Panc1 (cell line): ENCODE measurements at regions of chr2 and their contacts with region 1.

Region 1: DNA sequence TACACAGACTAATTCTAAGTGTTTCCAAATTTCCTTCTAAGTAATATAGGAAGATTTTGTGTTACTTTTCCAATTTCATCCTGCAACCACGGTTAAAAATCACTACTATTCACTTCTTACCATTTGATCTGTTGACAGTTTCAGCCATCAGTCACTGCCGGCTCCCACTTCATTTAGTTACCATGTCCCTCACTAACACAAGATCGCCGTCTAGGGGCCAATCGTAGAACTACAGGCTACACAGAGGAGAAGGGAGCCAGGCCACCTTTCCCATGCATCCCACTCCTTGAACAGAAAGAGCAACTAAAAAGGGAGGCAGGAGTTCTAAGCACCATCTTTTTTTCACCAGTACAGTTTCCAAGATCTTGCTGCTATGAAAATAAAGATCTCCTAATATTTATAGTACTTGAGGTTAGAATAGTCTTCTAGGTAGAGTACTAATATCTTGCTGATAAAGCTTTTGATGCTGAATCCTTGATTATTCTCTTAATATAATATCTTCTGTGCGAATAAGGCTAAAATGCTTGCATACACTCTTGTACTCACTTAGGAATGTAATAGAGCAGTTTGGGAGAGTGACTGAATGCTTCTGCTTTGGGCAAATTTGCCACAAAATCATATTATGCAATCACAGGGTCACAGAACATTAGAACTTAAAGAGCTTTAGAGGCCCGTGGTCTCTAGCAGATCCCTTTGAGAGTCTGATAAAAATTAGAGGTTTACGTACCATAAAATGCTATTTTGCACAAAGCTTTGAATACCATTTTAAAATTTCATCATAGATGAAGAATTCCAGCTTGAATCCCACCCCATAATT is 39.5 kb upstream of the CYP1B1 start:
- DNase-seq: peak; percentile 69
- ATAC-seq: peak; percentile 98
- H3K4me3 ChIP-seq: no peak overlapping the region
- H3K27ac ChIP-seq: peak overlapping the region; percentile 48; the same call in 1 of the 2 replicates
- H3K4me1 ChIP-seq: peaks cover 20% of the 10 kb centered on the region; the same call in 1 of the 2 replicates
- H3K27me3 ChIP-seq: no peaks in the 10 kb centered on the region
- CTCF ChIP-seq: peak; percentile 99

Region 2: DNA sequence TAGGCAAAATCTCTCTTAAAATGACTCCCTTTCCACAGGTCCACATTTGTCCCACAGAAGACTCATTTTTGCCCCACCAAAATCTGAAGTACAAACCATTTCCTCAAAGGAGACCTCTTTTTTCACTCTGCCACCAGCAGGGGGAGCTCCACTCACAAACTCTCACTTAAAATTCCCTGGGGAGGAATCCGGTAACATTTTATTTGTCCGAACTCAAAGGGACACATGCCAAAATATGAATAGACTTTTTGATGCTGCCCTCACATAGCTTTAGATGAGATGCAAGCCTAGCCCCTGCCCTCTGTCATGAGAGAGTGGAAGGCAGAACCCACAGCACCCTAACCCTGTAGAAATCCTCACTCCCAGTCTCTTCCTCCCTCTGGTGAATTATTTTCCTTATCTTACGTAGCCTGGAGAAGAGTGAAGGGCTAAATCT is 133.3 kb before region 1 on chr2:
- CTCF ChIA-PET with region 1: no interaction called
- POLR2A ChIA-PET with region 1: no interaction called
- in situ Hi-C with region 1: no loop called
- intact Hi-C with region 1: loop called (anchors 2 kb)
- DNase-seq: peak; percentile 47
- ATAC-seq: peak; percentile 84
- H3K4me3 ChIP-seq: peak overlapping the region; percentile 14 to 29; a peak in 2 of 4 replicates
- H3K27ac ChIP-seq: peak overlapping the region; percentile 45; the same call in 1 of the 2 replicates
- H3K4me1 ChIP-seq: peaks cover 5% of the 10 kb centered on the region; the same call in 1 of the 2 replicates
- H3K27me3 ChIP-seq: no peaks in the 10 kb centered on the region
- CTCF ChIP-seq: peak; percentile 90

Region 3: GRCh38 chr2:38146275-38146906 is 31.0 kb after region 1 on chr2:
- CTCF ChIA-PET with region 1: no interaction called
- POLR2A ChIA-PET with region 1: no interaction called
- in situ Hi-C with region 1: no loop called
- intact Hi-C with region 1: no loop called
- DNase-seq: no peak
- ATAC-seq: peak; percentile 79
- H3K4me3 ChIP-seq: no peak overlapping the region
- H3K27ac ChIP-seq: no peak overlapping the region
- H3K4me1 ChIP-seq: peaks cover 6% of the 10 kb centered on the region; the same call in 1 of the 2 replicates
- H3K27me3 ChIP-seq: no peaks in the 10 kb centered on the region
- CTCF ChIP-seq: no peak